ENCODE measurements at regions of chr17 and their contacts with region 1.

Region 1: GRCh38 chr17:76681222-76682137 is 29.3 kb downstream of the MXRA7 start:
- DNase-seq: peak; percentile 62 to 90
- H3K4me3 ChIP-seq: no peak overlapping the region
- H3K27ac ChIP-seq: no peak overlapping the region
- H3K4me1 ChIP-seq: peaks cover 0 to 19% (median 10%) of the 10 kb centered on the region in 4 experiments; a peak in 5 of 7 replicates
- H3K27me3 ChIP-seq: no peaks in the 10 kb centered on the region
- CTCF ChIP-seq: peak; percentile 92 to 95 (median 94)
- EP300 ChIP-seq: no peak
- POLR2A ChIP-seq: no peak
- RAD21 ChIP-seq: peak; percentile 84 to 91

Region 2: DNA sequence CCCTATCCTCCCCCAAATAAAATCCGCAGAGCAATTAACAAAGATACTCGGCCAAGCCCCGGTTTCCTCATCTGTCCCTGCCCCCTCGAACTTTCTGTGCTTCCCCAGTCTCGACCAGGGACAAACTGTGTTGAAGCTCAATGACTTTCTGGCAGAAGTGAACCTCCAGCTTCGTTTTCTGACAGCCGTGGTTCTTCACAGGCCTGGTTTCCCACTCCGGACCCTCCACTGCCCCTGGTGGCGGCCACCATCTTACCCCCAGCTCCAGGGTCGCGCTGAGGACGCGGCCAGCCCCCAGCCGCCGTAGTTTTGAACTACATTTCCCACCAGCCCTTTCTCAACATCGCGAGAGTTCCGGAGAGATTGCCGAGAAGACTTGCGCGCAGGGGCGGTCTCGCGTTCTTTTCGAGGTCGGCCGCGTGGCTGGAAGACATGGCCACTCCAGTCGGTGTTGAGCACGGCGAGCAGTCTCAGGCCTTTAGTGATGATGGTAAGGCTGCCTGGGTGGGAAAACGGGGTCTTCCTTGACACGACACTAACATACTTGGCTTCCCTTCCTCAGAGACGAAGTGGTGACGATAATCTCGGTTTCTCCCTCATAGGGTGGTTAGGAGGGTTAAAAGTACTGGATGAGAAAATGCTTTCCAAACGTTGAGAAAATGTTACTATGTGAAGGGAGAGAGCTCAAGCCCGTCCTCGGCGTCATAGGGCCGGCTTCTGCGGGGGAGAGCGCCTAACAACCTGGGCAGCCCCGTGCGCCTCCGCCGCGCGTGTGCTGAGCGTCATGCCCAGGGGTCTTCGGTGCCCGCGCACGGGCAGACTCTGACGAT is 123.9 kb before region 1 on chr17:
- CTCF ChIA-PET with region 1: interaction called, 34 read pairs
- POLR2A ChIA-PET with region 1: interaction called, 7 read pairs
- DNase-seq: peak; percentile 89 to 97
- H3K4me3 ChIP-seq: peak overlapping the region; percentile 89 to 100 (median 97)
- H3K27ac ChIP-seq: peak overlapping the region; percentile 93
- H3K4me1 ChIP-seq: peaks cover 2 to 10% (median 5%) of the 10 kb centered on the region in 4 experiments; a peak in 6 of 7 replicates
- H3K27me3 ChIP-seq: no peaks in the 10 kb centered on the region
- CTCF ChIP-seq: peak; percentile 63 to 81 (median 65)
- EP300 ChIP-seq: no peak
- POLR2A ChIP-seq: peak; percentile 86 to 95
- RAD21 ChIP-seq: peak; percentile 30 to 34; a peak in 3 of 4 replicates

Region 3: GRCh38 chr17:76597728-76598474 is 83.6 kb before region 1 on chr17:
- CTCF ChIA-PET with region 1: interaction called, 17 read pairs
- POLR2A ChIA-PET with region 1: no interaction called
- DNase-seq: no peak
- H3K4me3 ChIP-seq: no peak overlapping the region
- H3K27ac ChIP-seq: no peak overlapping the region
- H3K4me1 ChIP-seq: peaks cover 0 to 7% (median 3%) of the 10 kb centered on the region in 4 experiments; a peak in 3 of 7 replicates
- H3K27me3 ChIP-seq: no peaks in the 10 kb centered on the region; a peak in 2 of 7 replicates
- CTCF ChIP-seq: no peak
- EP300 ChIP-seq: no peak
- POLR2A ChIP-seq: no peak
- RAD21 ChIP-seq: no peak

Region 4: DNA sequence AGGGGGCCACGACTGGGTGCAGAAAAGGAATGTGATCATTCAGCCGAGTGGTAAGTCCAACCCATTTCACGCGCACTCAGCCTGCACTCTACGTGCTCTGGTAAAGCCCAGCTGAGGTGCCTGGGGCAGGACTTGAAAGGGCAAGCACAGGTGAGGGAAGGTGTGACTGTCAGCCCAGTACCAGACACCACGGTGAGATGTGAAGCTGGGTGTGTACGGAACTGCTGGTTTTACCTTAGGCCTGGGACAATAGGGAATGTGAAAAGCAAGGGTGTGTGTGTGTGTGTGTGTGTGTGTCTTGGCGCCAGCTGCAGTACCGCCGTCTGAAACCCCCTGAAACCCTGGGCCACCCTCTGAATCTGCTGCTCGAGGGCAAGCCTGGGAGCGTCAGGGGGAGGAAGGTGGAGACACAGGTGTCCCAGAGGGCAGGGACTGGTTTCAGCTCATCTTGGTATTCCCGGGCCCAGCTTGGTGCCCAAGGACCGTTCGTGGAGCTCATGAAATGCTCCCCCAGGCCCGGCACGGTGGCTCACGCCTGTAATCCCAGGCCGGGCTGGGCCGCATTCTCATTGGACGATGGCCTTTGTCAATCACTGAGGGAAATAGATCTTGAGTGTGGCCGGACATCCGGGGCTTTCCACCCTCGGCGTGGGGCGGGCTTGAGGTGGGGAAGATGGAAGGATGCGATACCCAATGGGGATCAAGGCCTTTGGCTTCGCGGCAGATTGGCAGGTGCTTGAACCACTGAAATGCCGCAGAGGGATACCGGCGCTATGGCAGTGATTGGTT is 10.2 kb before region 1 on chr17:
- CTCF ChIA-PET with region 1: interaction called, 43 read pairs
- POLR2A ChIA-PET with region 1: interaction called, 18 read pairs
- DNase-seq: peak; percentile 99
- H3K4me3 ChIP-seq: peak overlapping the region; percentile 73 to 86 (median 80)
- H3K27ac ChIP-seq: peak overlapping the region; percentile 74; the same call in 1 of the 2 replicates
- H3K4me1 ChIP-seq: peaks cover 3 to 10% (median 8%) of the 10 kb centered on the region in 4 experiments
- H3K27me3 ChIP-seq: no peaks in the 10 kb centered on the region
- CTCF ChIP-seq: no peak
- EP300 ChIP-seq: no peak
- POLR2A ChIP-seq: peak in 1 of 2 experiments; percentile 64; a peak in 2 of 3 replicates
- RAD21 ChIP-seq: no peak

Region 5: DNA sequence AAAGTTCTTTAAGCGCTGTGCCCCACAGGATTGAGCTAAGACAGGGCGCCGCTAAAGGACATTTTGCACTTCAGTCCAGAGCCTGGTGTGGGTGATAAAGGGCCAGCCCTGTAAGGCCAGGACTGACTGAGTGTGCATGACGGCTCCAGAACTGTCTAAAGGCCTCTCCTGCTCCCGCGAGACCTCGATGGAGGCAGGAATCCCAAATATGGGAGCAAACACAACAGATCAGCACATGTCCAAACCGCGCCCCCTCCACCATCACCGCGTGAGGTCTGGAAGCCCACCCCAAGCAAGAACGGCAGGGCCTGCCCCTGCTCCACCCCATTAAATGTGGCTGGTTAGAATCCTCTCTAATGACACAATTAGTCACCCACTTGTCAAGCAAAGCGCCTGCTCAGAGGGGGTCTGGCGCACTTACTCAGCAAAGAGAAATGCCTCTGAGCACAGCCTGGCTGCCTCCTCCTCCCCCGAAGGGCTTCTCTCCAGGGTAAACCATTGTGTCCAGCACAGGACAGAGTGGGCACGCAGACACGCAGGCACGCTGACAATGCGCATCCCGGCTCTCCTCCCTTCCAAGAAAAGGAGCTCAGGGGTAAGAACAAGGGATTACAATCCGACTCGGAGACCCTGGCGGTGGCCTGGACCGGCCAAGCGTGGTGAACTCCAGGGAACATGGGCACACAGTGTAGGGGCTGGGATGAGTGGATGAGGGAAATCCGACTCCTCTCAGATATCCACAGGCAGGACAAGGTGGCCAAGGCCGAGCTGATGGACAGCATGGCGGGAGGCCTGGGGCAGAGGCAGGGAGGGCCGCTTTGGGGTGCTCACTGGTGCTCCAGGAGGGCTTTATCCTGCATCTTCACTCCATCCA is 27.8 kb after region 1 on chr17:
- CTCF ChIA-PET with region 1: interaction called, 155 read pairs
- POLR2A ChIA-PET with region 1: interaction called, 3 read pairs
- DNase-seq: peak in 1 of 2 experiments; percentile 56
- H3K4me3 ChIP-seq: peak overlapping the region; percentile 28 to 67 (median 54); a peak in 7 of 8 replicates
- H3K27ac ChIP-seq: no peak overlapping the region
- H3K4me1 ChIP-seq: peaks cover 11 to 28% (median 19%) of the 10 kb centered on the region in 4 experiments
- H3K27me3 ChIP-seq: peaks cover 2 to 22% (median 20%) of the 10 kb centered on the region in 4 experiments
- CTCF ChIP-seq: no peak
- EP300 ChIP-seq: no peak
- POLR2A ChIP-seq: no peak
- RAD21 ChIP-seq: no peak

Region 6: DNA sequence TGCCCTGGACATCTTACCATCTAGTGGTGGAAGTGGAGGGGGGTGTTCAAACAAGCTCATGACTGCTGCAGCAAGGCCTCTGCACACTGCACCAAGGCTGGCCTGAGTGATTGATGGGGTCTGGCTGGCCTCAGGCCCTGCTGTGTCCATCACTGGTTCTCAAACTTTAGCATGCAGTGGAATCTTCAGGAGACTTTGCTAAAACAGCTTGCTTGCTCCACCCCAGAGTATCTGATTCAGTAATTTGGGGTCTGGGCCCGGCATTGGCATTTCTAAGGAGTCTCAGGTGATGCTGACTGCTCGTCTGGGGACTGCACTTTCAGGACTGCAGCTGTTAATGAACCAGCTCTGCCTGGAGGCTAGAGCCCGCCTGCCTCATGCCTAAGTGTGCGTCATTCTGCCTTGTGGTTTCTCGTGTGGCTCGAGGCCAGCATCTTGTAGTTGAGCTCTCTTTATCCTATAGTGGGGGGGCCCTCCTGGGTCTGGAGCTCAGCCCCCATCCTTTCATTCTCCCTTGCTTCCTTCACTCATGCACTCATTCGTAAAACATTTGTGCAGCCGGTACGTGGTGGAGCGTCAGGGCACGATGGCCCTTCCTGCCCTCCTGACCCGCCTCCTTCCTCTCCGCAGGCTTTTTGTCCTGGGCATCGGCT is 190.9 kb after region 1 on chr17:
- CTCF ChIA-PET with region 1: no interaction called
- POLR2A ChIA-PET with region 1: no interaction called
- DNase-seq: no peak
- H3K4me3 ChIP-seq: no peak overlapping the region
- H3K27ac ChIP-seq: no peak overlapping the region
- H3K4me1 ChIP-seq: peaks cover under 1 to 16% (median 9%) of the 10 kb centered on the region in 4 experiments; a peak in 6 of 7 replicates
- H3K27me3 ChIP-seq: peaks cover 4 to 24% (median 17%) of the 10 kb centered on the region in 4 experiments; a peak in 6 of 7 replicates
- CTCF ChIP-seq: no peak
- EP300 ChIP-seq: no peak
- POLR2A ChIP-seq: no peak
- RAD21 ChIP-seq: no peak